ENCODE measurements at regions of chr22 and their contacts with region 1.

Region 1: GRCh38 chr22:22959147-22959827 is 71.7 kb downstream of the IGLL5 start:
- DNase-seq: peak; percentile 56
- ATAC-seq: peak; percentile 66
- H3K4me3 ChIP-seq: no peak overlapping the region
- H3K27ac ChIP-seq: no peak overlapping the region
- H3K4me1 ChIP-seq: peaks cover 11% of the 10 kb centered on the region
- H3K27me3 ChIP-seq: no peaks in the 10 kb centered on the region
- CTCF ChIP-seq: peak; percentile 81 to 100 (median 95); a peak in 5 of 6 replicates
- EP300 ChIP-seq: no peak
- POLR2A ChIP-seq: no peak
- RAD21 ChIP-seq: peak; percentile 100

Region 2: GRCh38 chr22:22030493-22031182 is 928.6 kb before region 1 on chr22:
- CTCF ChIA-PET with region 1: interaction called, 66 read pairs
- POLR2A ChIA-PET with region 1: interaction called, 9 read pairs
- RAD21 ChIA-PET with region 1: interaction called, 47 read pairs
- SMC1A ChIA-PET with region 1: interaction called, 18 read pairs
- in situ Hi-C with region 1: loop called (anchors 5 kb)
- intact Hi-C with region 1: loop called (anchors 1 kb)
- DNase-seq: peak; percentile 84
- ATAC-seq: peak; percentile 82
- H3K4me3 ChIP-seq: peak overlapping the region; percentile 66
- H3K27ac ChIP-seq: peak overlapping the region; percentile 80
- H3K4me1 ChIP-seq: peaks cover 38% of the 10 kb centered on the region
- H3K27me3 ChIP-seq: no peaks in the 10 kb centered on the region
- CTCF ChIP-seq: peak; percentile 85 to 93 (median 88)
- EP300 ChIP-seq: no peak; a peak in 1 of 4 replicates
- POLR2A ChIP-seq: peak; percentile 92
- RAD21 ChIP-seq: peak; percentile 84

Region 3: GRCh38 chr22:22168190-22168940 is 790.9 kb before region 1 on chr22:
- CTCF ChIA-PET with region 1: interaction called, 47 read pairs
- POLR2A ChIA-PET with region 1: no interaction called
- RAD21 ChIA-PET with region 1: interaction called, 11 read pairs
- SMC1A ChIA-PET with region 1: interaction called, 11 read pairs
- in situ Hi-C with region 1: no loop called
- intact Hi-C with region 1: no loop called
- DNase-seq: peak; percentile 57
- ATAC-seq: peak; percentile 74
- H3K4me3 ChIP-seq: peak overlapping the region; percentile 52; the same call in 1 of the 2 replicates
- H3K27ac ChIP-seq: peak overlapping the region; percentile 83
- H3K4me1 ChIP-seq: peaks cover 15% of the 10 kb centered on the region
- H3K27me3 ChIP-seq: no peaks in the 10 kb centered on the region
- CTCF ChIP-seq: no peak
- EP300 ChIP-seq: no peak
- POLR2A ChIP-seq: no peak; the same call in 1 of the 2 replicates
- RAD21 ChIP-seq: no peak

Region 4: GRCh38 chr22:22810018-22810427 is 149.3 kb before region 1 on chr22:
- CTCF ChIA-PET with region 1: interaction called, 323 read pairs
- POLR2A ChIA-PET with region 1: interaction called, 3 read pairs
- RAD21 ChIA-PET with region 1: interaction called, 184 read pairs
- SMC1A ChIA-PET with region 1: interaction called, 220 read pairs
- in situ Hi-C with region 1: no loop called
- intact Hi-C with region 1: loop called (anchors 1 kb)
- DNase-seq: no peak
- ATAC-seq: peak; percentile 97
- H3K4me3 ChIP-seq: no peak overlapping the region
- H3K27ac ChIP-seq: no peak overlapping the region
- H3K4me1 ChIP-seq: no peaks in the 10 kb centered on the region; the same call in 1 of the 2 replicates
- H3K27me3 ChIP-seq: no peaks in the 10 kb centered on the region
- CTCF ChIP-seq: peak; percentile 40 to 82 (median 67); a peak in 5 of 6 replicates
- EP300 ChIP-seq: no peak
- POLR2A ChIP-seq: no peak
- RAD21 ChIP-seq: no peak

Region 5: DNA sequence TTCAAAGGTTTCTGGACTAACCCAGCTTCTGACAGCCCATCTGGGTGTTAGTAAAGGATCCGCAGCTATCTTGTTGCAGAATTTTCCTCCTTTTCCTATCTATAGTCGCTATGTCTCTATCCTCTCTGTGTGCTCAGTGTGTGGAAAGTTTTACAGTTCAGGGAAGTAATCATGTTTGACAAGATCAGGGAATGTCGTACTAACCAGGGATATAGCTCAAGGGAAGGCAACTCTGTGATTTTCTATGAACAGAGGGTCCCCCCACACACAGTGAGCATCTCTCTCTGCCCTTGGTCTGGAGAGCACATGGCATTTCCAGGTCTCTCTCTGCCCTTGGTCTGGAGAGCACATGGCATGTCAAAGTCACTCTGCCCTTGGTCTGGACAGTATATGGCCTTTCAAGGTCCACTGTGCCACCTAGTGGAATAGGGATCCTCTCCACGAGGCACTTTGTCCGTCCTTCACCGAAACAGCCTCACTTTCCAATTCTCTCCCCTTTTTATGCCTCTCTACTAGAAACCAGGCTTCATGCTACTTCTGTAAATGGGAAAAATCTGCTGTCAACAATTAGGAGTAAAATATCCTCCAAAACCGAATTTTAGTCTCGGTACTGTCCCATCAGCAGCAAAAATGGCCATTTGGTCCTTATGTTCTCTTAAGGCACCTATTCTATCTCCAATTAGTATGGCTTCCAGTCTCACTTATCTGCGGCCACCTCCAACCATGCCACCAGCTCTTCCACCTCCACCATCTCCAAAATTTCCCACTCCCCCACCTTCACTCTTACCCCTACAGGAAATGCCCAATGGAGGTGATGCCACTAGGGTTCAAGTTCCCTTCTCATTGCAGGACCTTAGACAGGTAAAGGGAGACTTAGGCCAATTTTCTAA is 17.0 kb after region 1 on chr22:
- CTCF ChIA-PET with region 1: interaction called, 78 read pairs
- POLR2A ChIA-PET with region 1: no interaction called
- RAD21 ChIA-PET with region 1: interaction called, 15 read pairs
- SMC1A ChIA-PET with region 1: interaction called, 34 read pairs
- in situ Hi-C with region 1: no loop called
- intact Hi-C with region 1: no loop called
- DNase-seq: no peak
- ATAC-seq: no peak
- H3K4me3 ChIP-seq: no peak overlapping the region
- H3K27ac ChIP-seq: no peak overlapping the region
- H3K4me1 ChIP-seq: no peaks in the 10 kb centered on the region
- H3K27me3 ChIP-seq: no peaks in the 10 kb centered on the region; a peak in 1 of 4 replicates
- CTCF ChIP-seq: no peak
- EP300 ChIP-seq: no peak
- POLR2A ChIP-seq: no peak
- RAD21 ChIP-seq: no peak

Region 6: GRCh38 chr22:23069502-23070357 is 110.4 kb after region 1 on chr22:
- CTCF ChIA-PET with region 1: interaction called, 17 read pairs
- POLR2A ChIA-PET with region 1: interaction called, 5 read pairs
- RAD21 ChIA-PET with region 1: interaction called, 18 read pairs
- SMC1A ChIA-PET with region 1: interaction called, 20 read pairs
- in situ Hi-C with region 1: no loop called
- intact Hi-C with region 1: no loop called
- DNase-seq: peak; percentile 15
- ATAC-seq: peak; percentile 98
- H3K4me3 ChIP-seq: peak overlapping the region; percentile 61; the same call in 1 of the 2 replicates
- H3K27ac ChIP-seq: no peak overlapping the region
- H3K4me1 ChIP-seq: peaks cover 3% of the 10 kb centered on the region; the same call in 1 of the 2 replicates
- H3K27me3 ChIP-seq: peaks cover 0 to 9% of the 10 kb centered on the region in 2 experiments; a peak in 2 of 4 replicates
- CTCF ChIP-seq: 0 out of 6 replicates have a peak, but pooled peaks of 1 of the 3 experiments have one; percentile 0
- EP300 ChIP-seq: no peak
- POLR2A ChIP-seq: no peak
- RAD21 ChIP-seq: no peak

Region 7: DNA sequence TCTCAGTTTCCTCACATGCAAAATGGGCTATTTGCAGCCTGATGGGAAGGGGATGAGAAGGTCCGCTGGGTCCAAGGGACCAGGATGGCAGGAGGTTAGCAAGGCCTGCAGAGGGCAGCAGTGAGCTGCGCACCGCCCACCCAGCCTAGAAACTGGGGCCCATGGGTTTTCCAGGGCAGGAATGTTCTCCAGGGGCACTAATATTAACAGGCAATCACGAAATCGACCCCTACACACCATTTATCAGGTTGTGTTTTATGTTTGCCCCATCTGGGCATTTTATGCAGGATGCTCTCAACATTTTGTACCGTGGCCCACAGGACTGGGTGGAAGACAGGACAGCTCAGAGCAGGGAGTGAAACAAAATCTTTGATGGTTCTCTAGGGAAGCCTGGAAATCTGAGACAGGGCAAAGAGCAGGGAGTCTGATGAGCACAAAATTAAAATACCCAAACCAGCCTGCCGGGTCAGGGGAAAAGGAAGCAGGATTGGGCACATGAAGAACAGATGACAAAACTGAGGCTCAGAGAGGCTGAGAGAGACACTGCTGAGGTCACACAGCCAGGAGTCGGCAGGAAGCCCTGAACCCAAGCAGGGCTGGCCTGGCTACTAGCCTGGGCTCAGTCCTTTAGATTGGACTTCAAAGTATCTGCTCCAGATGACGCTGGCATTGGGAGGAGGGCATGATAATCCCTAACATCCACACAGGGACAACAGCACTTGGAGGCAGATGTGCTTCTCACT is 219.4 kb after region 1 on chr22:
- CTCF ChIA-PET with region 1: interaction called, 24 read pairs
- POLR2A ChIA-PET with region 1: no interaction called
- RAD21 ChIA-PET with region 1: interaction called, 18 read pairs
- SMC1A ChIA-PET with region 1: interaction called, 8 read pairs
- in situ Hi-C with region 1: no loop called
- intact Hi-C with region 1: no loop called
- DNase-seq: no peak
- ATAC-seq: peak; percentile 51
- H3K4me3 ChIP-seq: no peak overlapping the region
- H3K27ac ChIP-seq: no peak overlapping the region
- H3K4me1 ChIP-seq: peaks cover 59% of the 10 kb centered on the region
- H3K27me3 ChIP-seq: no peaks in the 10 kb centered on the region
- CTCF ChIP-seq: peak; percentile 95 to 98 (median 97); a peak in 5 of 6 replicates
- EP300 ChIP-seq: no peak
- POLR2A ChIP-seq: no peak
- RAD21 ChIP-seq: peak; percentile 92

Region 8: GRCh38 chr22:23709107-23709506 is 749.8 kb after region 1 on chr22:
- CTCF ChIA-PET with region 1: no interaction called
- POLR2A ChIA-PET with region 1: no interaction called
- RAD21 ChIA-PET with region 1: no interaction called
- SMC1A ChIA-PET with region 1: no interaction called
- in situ Hi-C with region 1: no loop called
- intact Hi-C with region 1: no loop called
- DNase-seq: no peak
- ATAC-seq: no peak
- H3K4me3 ChIP-seq: no peak overlapping the region
- H3K27ac ChIP-seq: peak overlapping the region; percentile 28; the same call in 1 of the 2 replicates
- H3K4me1 ChIP-seq: 0 out of 2 replicates have a peak, but pooled peaks cover 9% of the 10 kb centered on the region
- H3K27me3 ChIP-seq: no peaks in the 10 kb centered on the region
- CTCF ChIP-seq: no peak
- EP300 ChIP-seq: no peak
- POLR2A ChIP-seq: no peak
- RAD21 ChIP-seq: no peak

Measured in GM12878 (cell line).